Activated CD4-positive, alpha-beta T cell treated with anti-CD3 and anti-CD28 coated beads for 36 hours (primary cell): ENCODE measurements at regions of chr2 and their contacts with region 1.

Region 1: GRCh38 chr2:143110758-143111428 is 18.3 kb upstream of the ARHGAP15 start:
- DNase-seq: peak; percentile 79
- ATAC-seq: peak; percentile 83
- H3K4me3 Mint-ChIP-seq: peak overlapping the region; percentile 42
- H3K27ac Mint-ChIP-seq: peak overlapping the region; percentile 87
- H3K4me1 Mint-ChIP-seq: peaks cover 42% of the 10 kb centered on the region
- H3K27me3 Mint-ChIP-seq: no peaks in the 10 kb centered on the region

Region 2: DNA sequence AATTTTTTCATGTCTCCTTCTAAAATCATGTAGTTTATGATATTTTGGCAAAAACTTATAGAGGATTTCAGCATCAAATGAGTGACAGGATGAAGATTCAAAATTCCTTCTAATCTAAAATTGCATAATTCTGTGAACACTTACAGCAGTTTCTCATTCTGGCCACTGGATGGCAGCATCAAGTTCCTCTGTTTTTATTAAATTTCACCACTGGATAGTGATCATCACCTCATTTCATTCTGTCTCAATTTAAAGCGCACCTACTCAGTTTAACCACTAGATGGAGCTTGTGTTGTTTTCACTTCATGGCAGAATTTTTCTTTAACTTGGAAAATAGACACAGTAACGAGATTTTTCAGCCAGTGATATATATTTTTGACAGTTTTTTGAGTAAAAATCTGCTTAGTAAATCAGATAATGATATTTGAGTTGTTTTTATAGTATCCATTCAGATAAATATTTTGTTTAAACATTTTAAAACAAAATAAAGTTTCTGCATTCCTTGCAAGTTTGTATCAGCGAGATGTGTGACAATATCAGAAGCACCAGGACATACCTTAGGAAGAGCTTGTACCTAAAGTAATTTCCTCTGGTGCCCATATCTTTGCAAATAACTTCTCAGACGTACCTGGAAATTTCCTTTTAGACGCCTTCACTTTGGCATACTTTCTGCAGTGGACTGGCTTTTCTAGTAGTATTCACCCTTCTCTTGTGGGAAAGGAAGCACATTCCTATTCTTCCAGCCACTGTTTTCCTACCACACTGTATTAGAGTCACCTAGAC is 76.4 kb before region 1 on chr2:
- CTCF ChIA-PET with region 1: interaction called, 6 read pairs
- POLR2A ChIA-PET with region 1: no interaction called
- intact Hi-C with region 1: loop called (anchors 1 kb)
- DNase-seq: peak; percentile 68
- ATAC-seq: peak; percentile 90
- H3K4me3 Mint-ChIP-seq: no peak overlapping the region
- H3K27ac Mint-ChIP-seq: no peak overlapping the region
- H3K4me1 Mint-ChIP-seq: peaks cover 9% of the 10 kb centered on the region
- H3K27me3 Mint-ChIP-seq: peaks cover 2% of the 10 kb centered on the region

Region 3: DNA sequence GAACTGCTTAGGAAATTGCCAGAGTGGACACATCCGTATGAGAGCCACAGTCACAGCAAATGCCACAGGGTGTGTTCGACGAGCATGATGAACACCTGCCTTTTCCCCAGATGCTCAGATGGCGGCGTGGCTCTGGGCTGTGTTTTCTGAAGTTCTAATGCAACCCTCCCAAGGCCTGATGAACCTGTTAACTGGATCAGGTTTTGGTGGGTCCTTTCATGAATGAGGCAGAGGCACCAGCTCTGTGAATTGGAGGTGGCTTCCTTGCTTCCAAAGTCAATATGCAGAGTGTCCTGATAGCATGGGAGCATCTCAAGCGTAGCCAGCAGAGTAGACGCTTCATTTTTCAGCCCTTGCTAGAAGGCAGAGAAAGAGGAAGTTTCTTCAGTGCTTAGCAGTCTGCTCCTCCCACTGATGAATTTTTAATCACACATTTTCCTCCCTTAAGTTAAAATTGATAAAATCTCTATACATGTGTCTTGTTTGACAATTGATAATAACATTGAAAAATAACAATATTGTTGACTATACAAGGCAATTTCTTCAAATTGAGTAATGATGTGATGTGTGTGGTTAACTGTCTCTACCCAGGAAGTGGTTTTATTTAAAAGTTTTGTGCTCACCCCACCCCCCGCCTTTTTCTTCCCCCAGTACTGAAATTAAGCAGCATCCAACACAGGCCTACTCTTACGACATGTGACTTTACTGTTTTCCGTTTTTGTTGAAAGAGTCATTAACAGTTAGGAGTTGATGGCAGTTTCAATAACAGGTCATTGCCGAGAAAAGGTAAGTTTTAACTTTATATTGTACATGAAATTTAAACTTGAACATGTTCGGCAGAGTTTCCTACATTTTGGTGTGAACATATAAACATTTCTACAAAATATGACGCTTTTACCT is 18.0 kb after region 1 on chr2 and contains the start of gene ARHGAP15:
- CTCF ChIA-PET with region 1: interaction called, 49 read pairs
- POLR2A ChIA-PET with region 1: no interaction called
- intact Hi-C with region 1: loop called (anchors 2 kb)
- DNase-seq: peak; percentile 83
- ATAC-seq: peak; percentile 81
- H3K4me3 Mint-ChIP-seq: peak within 1 kb of the TSS; percentile 71
- H3K27ac Mint-ChIP-seq: peak within 1 kb of the TSS; percentile 99
- H3K4me1 Mint-ChIP-seq: peaks cover 34% of the 10 kb centered on the region
- H3K27me3 Mint-ChIP-seq: no peaks in the 10 kb centered on the region
- total RNA-seq, gene ARHGAP15: 62.6 to 64.3 TPM

Region 4: GRCh38 chr2:143162123-143162837 is 51.4 kb after region 1 on chr2:
- CTCF ChIA-PET with region 1: interaction called, 107 read pairs
- POLR2A ChIA-PET with region 1: no interaction called
- intact Hi-C with region 1: loop called (anchors 2 kb)
- DNase-seq: peak; percentile 74
- ATAC-seq: peak; percentile 95
- H3K4me3 Mint-ChIP-seq: no peak overlapping the region
- H3K27ac Mint-ChIP-seq: peak overlapping the region; percentile 29
- H3K4me1 Mint-ChIP-seq: peaks cover 83% of the 10 kb centered on the region
- H3K27me3 Mint-ChIP-seq: no peaks in the 10 kb centered on the region

Region 5: GRCh38 chr2:143230506-143231253 is 119.8 kb after region 1 on chr2:
- CTCF ChIA-PET with region 1: interaction called, 90 read pairs
- POLR2A ChIA-PET with region 1: no interaction called
- intact Hi-C with region 1: no loop called
- DNase-seq: no peak
- ATAC-seq: no peak
- H3K4me3 Mint-ChIP-seq: no peak overlapping the region
- H3K27ac Mint-ChIP-seq: no peak overlapping the region
- H3K4me1 Mint-ChIP-seq: peaks cover 25% of the 10 kb centered on the region
- H3K27me3 Mint-ChIP-seq: no peaks in the 10 kb centered on the region

Region 6: GRCh38 chr2:143284087-143284675 is 173.3 kb after region 1 on chr2:
- CTCF ChIA-PET with region 1: interaction called, 11 read pairs
- POLR2A ChIA-PET with region 1: no interaction called
- intact Hi-C with region 1: no loop called
- DNase-seq: peak; percentile 42
- ATAC-seq: peak; percentile 67
- H3K4me3 Mint-ChIP-seq: no peak overlapping the region
- H3K27ac Mint-ChIP-seq: peak overlapping the region; percentile 3
- H3K4me1 Mint-ChIP-seq: peaks cover 27% of the 10 kb centered on the region
- H3K27me3 Mint-ChIP-seq: no peaks in the 10 kb centered on the region